ENCODE measurements at regions of chr7 and their contacts with region 1.

Region 1: GRCh38 chr7:107725151-107725740 is 18.7 kb upstream of the CBLL1 start:
- DNase-seq: peak; percentile 39
- ATAC-seq: no peak

Region 2: GRCh38 chr7:106947244-106947728 is 778.0 kb before region 1 on chr7:
- intact Hi-C with region 1: loop called in 1 of 2 experiments (anchors 10 kb)
- DNase-seq: peak; percentile 40
- ATAC-seq: peak; percentile 91 to 93

Region 3: DNA sequence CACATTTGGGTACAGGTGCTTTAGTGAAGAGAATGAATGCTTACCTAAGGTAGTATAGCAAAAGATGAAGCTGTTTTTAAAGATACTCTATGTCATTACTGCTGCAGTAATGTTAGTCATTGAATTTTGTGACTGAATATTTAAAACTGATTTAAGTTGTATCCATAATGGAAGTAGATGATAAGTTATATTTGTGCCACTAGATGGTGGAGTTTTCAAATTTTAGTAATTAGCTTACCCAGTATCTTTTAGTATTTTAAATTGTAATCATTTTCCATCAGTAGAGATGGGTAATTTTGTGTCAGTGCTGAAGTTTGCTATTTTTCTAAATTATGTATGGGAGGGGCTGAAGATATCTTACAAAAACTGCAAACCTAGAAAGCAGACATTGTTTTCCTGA is 531.2 kb before region 1 on chr7:
- intact Hi-C with region 1: loop called in 1 of 2 experiments (anchors 10 kb)
- DNase-seq: no peak
- ATAC-seq: no peak

Region 4: GRCh38 chr7:107462740-107463444 is 262.4 kb before region 1 on chr7:
- intact Hi-C with region 1: loop called (anchors 2 to 5 kb)
- DNase-seq: peak; percentile 56
- ATAC-seq: peak; percentile 94 to 95

Region 5: DNA sequence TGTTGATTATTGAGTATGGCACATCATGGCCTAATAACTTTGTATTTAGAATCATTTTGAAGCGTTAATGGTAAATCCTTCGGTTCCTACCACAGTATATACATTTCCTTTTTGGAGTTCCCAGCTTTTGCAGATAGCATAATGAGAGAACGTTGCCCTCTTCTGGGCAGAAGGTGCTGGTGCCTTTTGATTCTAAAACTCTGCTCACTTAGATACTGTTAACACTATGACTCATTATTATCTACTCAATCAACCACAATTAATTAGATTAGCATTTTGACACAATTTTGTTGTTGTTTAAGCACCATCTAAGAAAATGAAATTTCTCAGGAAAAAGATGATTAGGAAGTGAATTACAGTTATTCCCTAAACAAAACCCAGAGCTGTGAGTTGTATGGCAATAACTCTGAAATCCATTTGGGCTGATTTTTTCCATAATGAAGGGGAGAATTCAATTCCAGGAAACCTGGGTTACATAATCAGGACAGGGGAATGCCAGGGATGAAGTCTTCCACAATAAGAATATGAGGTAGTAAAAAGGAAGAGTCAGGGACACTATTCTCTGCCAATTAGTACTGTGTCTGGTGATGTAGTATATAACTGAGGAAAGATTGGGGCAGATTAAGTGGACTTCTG is 154.3 kb after region 1 on chr7:
- intact Hi-C with region 1: loop called in 1 of 2 experiments (anchors 10 kb)
- DNase-seq: no peak
- ATAC-seq: peak; percentile 67 to 76

Measured in left cardiac atrium (tissue), 4 donors.